Panc1 (cell line): ENCODE measurements at regions of chr3 and their contacts with region 1.

Region 1: DNA sequence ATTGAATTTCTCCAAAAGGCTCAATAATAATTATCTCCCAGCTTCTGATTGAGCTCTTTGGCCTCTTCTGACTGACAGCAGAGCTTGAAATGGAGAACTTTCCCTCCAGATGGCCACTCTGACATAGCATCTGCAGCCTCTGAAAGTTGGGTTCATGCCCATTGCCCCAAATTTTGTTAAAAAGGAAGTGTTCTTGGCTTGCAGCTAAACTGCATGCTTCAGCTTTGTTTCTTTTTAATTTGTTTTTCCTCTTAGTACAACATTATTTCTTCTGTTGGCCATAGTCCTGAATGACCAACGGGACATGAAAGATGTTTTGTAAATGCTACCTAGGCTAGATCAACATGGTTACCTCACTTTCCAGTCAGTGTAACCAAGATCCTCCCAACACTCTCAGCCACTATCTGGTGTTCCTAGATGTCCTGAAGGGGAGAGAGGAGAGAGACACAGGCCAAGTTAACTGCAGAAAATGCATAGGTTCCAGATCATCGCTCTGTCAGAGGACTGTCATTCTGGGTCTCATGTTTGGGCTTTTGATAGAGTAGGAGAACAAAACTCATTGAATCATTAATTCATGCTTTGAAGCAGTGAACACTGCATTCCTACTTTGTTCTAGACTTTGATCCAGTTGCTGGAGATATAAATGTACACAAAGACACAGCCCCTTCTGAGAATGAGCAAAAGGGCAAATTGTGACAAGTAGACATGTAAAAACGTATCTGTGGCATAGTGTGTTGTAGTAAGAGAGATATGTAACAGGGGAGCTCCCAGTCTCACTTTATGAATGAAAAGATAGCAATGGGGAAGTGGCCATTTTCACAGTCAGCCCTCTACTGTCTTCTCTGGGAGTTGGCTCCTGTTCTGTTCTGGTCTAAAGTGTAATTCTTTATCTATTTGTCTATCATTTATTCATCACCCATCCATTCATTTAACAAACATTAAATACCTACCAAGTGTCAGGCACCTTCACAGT is 156.2 kb downstream of the ZNF621 start:
- DNase-seq: no peak
- ATAC-seq: no peak
- H3K4me3 ChIP-seq: no peak overlapping the region
- H3K27ac ChIP-seq: no peak overlapping the region
- H3K4me1 ChIP-seq: no peaks in the 10 kb centered on the region
- H3K27me3 ChIP-seq: no peaks in the 10 kb centered on the region
- CTCF ChIP-seq: no peak

Region 2: GRCh38 chr3:40661284-40661683 is 19.7 kb before region 1 on chr3:
- CTCF ChIA-PET with region 1: no interaction called
- POLR2A ChIA-PET with region 1: no interaction called
- in situ Hi-C with region 1: no loop called
- intact Hi-C with region 1: loop called (anchors 1 kb)
- DNase-seq: no peak
- ATAC-seq: no peak
- H3K4me3 ChIP-seq: no peak overlapping the region
- H3K27ac ChIP-seq: no peak overlapping the region
- H3K4me1 ChIP-seq: no peaks in the 10 kb centered on the region
- H3K27me3 ChIP-seq: no peaks in the 10 kb centered on the region
- CTCF ChIP-seq: no peak